ENCODE measurements at regions of chr18 and their contacts with region 1.

Region 1: DNA sequence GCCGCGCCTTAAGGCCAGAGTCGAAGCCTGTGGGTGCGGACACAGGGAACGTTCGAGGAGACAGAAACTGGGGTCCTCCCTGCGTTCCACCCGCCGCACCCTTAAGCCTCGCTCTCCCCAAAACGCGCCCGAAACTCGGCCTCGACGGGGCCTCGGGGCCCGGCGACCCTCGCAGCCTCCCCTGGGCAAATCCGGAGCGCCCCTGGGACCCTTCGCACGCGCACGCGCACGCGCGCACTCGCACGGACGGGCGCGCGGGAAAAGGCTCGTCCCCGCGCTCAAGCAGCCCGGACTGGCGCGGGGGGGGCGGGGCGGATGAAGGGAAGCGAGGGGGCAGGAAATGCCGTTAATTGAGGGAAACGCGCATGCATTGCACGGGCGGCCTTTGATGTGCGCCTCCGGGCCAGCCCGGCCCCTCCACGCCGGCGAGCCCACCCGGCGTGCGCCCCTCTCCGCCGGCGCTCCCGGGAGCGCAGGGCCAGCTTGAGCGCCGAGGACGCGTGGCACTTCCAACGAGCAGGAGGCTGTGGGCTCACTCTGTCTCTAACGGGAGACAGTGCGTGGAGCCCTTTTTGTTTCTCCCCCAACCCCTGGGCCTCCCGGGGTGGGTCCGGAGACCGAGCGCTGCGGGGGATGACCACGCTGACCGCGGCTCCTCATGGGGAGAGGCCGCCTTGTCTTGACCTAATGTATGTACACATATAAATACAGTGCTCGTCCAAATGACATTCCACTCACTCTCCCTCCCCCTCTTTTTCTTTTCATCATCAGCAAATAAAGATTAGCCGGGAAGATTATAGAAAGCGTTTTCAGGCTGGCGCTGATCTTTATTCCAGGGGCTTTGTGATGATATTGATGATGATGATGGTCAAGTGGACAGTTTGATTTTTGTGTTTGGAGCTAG is 5.3 kb upstream of the SALL3 start:
- DNase-seq: no peak
- H3K4me3 ChIP-seq: no peak overlapping the region
- H3K4me3 Mint-ChIP-seq: no peak overlapping the region
- H3K27ac Mint-ChIP-seq: no peak overlapping the region
- H3K4me1 ChIP-seq: no peaks in the 10 kb centered on the region
- H3K4me1 Mint-ChIP-seq: no peaks in the 10 kb centered on the region
- H3K27me3 ChIP-seq: no peaks in the 10 kb centered on the region
- H3K27me3 Mint-ChIP-seq: no peaks in the 10 kb centered on the region
- CTCF ChIP-seq: no peak

Region 2: GRCh38 chr18:78995740-78996395 is 21.5 kb after region 1 on chr18:
- CTCF ChIA-PET with region 1: no interaction called
- POLR2A ChIA-PET with region 1: no interaction called
- intact Hi-C with region 1: loop called (anchors 2 kb)
- DNase-seq: no peak
- H3K4me3 ChIP-seq: no peak overlapping the region
- H3K4me3 Mint-ChIP-seq: no peak overlapping the region
- H3K27ac Mint-ChIP-seq: no peak overlapping the region
- H3K4me1 ChIP-seq: no peaks in the 10 kb centered on the region
- H3K4me1 Mint-ChIP-seq: no peaks in the 10 kb centered on the region
- H3K27me3 ChIP-seq: no peaks in the 10 kb centered on the region
- H3K27me3 Mint-ChIP-seq: no peaks in the 10 kb centered on the region
- CTCF ChIP-seq: no peak

Measured in Caco-2 (cell line).